HAP-1 (cell line): ENCODE measurements at regions of chr22 and their contacts with region 1.

Region 1: DNA sequence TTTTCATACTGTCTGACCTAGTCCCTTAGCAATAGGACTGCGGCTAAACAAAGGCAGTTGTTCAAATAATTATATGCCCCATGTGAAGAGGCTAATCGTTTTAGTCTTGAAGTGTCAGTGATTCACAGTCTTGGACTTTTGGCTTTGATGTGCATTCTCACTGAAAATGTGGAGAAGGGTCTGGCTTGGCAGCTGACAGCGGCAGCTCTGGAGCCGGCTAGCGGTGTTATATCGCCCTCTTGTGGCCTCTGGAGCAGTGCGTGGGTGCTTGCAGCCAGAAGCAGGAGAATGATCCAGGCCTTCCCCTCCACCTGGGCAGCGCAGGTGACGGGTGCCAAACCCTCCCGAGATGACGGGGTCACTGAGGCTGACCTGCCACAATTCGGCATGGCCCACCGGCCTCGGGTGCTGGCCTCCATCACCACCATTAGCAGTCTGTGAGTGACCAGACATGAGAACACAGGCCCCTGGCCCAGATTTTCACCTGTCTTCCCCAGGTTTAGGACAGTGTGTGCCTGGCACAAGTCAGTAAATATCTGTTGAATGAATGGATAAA is 90.3 kb upstream of the PITPNB start:
- DNase-seq: peak; percentile 57 to 88
- H3K4me3 ChIP-seq: no peak overlapping the region
- H3K4me1 ChIP-seq: no peaks in the 10 kb centered on the region
- H3K27me3 ChIP-seq: no peaks in the 10 kb centered on the region

Region 2: DNA sequence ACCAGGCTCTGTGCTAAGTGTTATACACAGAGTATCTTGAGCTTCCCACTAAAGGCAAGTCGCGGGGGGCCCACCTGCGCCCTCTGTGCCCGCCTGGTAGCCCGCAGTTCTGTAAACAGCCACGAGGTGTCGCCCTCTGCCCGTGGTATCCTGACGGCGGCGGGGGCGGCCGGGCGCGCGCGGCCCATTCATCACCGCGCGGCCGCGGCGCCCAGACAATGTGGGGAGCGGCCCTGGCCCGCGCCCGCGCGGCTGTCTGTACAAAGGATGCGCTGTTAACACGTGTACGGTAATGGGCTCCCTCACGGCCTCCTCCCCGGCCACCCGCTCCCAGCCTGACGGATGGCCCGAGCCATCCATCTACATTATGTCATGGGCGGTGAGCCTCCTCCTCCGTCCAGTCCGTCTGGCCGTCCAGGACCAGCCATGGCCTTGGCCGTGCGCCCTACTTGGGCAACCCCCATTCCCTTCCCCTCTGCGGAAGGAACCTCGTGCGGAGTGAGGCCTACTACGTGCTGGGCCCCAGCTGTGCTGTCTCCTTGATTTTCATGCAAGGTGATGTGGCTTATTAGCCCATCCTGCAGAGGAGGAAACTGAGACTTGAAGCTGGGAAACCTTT is 1252.6 kb before region 1 on chr22:
- in situ Hi-C with region 1: loop called (anchors 10 kb)
- DNase-seq: peak; percentile 51 to 88
- H3K4me3 ChIP-seq: peak overlapping the region; percentile 11
- H3K4me1 ChIP-seq: peaks cover 4% of the 10 kb centered on the region
- H3K27me3 ChIP-seq: no peaks in the 10 kb centered on the region

Region 3: GRCh38 chr22:27885977-27886842 is 123.1 kb before region 1 on chr22:
- in situ Hi-C with region 1: loop called (anchors 5 kb)
- DNase-seq: peak; percentile 42 to 61
- H3K4me3 ChIP-seq: no peak overlapping the region
- H3K4me1 ChIP-seq: peaks cover 2% of the 10 kb centered on the region; the same call in 1 of the 2 replicates
- H3K27me3 ChIP-seq: no peaks in the 10 kb centered on the region

Region 4: GRCh38 chr22:28829358-28830181 is 820.2 kb after region 1 on chr22:
- in situ Hi-C with region 1: loop called (anchors 25 kb)
- DNase-seq: peak; percentile 61 to 84
- H3K4me3 ChIP-seq: no peak overlapping the region
- H3K4me1 ChIP-seq: no peaks in the 10 kb centered on the region
- H3K27me3 ChIP-seq: no peaks in the 10 kb centered on the region